WTC11 (cell line): ENCODE measurements at regions of chr9 and their contacts with region 1.

Region 1: DNA sequence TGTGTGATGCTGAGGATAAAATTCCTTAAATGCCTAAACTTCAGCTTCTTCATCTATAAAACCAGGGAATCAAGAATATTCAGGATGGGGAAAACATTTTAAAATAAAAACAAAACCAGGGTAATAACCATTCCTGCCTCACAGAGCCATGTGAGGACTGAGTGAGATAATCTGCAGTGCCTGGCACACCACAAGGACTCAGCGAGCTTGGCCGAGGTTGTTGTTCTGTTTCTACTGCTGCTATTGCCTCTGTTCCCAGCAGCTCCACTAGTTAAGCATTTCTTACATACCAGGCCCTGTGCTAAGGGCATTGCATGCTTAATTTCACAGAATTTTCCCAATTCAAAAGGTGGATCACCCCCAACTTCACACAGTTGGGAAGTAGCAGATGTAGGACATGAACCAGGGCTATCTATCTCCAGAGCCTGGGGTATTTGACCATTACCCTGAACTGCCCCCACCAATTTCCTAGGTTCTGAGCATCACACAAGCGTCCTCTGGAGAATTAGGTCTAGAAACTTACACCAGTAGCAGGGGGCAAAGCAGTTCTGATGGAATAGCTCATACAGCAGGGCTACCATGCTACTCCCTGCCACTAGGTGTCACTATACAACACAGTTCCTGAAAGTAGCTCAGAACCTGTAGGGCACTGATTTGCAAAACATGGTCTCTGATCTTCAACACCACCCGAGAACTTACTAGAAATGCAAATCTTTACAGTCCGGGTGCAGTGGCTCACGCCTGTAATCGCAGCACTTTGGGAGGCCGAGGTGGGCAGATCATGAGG is 74.3 kb downstream of the LRSAM1 start:
- DNase-seq: no peak
- ATAC-seq: no peak
- H3K4me3 Mint-ChIP-seq: no peak overlapping the region
- H3K27ac Mint-ChIP-seq: no peak overlapping the region; the same call in 1 of the 2 replicates
- H3K4me1 Mint-ChIP-seq: peaks cover 32% of the 10 kb centered on the region
- H3K27me3 Mint-ChIP-seq: no peaks in the 10 kb centered on the region; the same call in 1 of the 2 replicates
- CTCF ChIP-seq: peak; percentile 61

Region 2: GRCh38 chr9:127503947-127504782 is 21.4 kb before region 1 on chr9:
- CTCF ChIA-PET with region 1: interaction called, 17 read pairs
- POLR2A ChIA-PET with region 1: no interaction called
- DNase-seq: peak; percentile 94
- ATAC-seq: peak; percentile 84
- H3K4me3 Mint-ChIP-seq: no peak overlapping the region
- H3K27ac Mint-ChIP-seq: no peak overlapping the region
- H3K4me1 Mint-ChIP-seq: no peaks in the 10 kb centered on the region
- H3K27me3 Mint-ChIP-seq: no peaks in the 10 kb centered on the region
- CTCF ChIP-seq: peak; percentile 89

Region 3: DNA sequence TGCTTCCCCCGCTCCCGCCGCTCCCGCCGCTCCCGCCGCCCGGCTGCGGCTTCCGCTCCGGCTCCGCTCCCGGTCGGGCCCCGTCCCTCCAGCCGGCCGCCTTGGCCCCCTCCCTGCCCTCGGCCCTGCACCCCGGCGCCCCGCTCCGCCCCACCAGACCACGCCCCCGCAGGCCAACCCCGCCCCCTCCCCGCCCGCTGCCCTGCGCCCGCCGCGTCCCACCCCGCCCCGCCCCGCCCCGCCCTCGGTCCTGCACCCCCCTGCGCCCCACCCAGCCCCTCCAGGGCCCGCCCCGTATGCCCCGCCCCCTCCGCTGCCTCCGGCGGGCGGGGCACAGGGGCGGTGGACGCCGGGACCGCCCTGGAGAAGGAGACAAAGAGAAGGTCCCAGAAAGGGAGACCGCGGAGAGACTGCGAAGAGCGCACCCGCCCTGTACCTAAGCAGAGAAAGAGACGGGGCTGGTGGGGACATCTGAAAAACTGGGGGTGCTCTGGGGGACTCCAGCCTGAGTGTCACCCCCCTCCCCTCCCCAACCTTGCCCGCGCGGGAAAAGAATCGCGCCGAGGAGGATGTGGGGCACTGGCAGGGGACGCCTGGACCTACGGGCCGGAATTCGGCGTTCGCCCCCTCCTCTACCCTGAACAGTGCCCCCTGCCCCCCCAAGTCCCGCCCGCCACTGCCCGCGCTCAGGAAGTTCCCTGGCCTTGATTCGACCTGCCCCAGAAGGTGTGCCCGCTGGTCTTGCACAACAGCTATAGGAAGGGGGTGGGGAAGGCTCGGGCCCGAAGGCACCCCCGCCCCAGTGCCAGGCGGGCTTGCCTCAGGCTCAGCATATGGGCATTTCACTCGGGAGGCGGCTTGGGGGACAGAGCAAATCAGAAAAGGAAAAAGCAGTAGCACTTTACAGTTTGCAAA is 43.6 kb after region 1 on chr9:
- CTCF ChIA-PET with region 1: interaction called, 16 read pairs
- POLR2A ChIA-PET with region 1: interaction called, 6 read pairs
- DNase-seq: peak; percentile 77
- ATAC-seq: peak; percentile 79
- H3K4me3 Mint-ChIP-seq: peak overlapping the region; percentile 71
- H3K27ac Mint-ChIP-seq: no peak overlapping the region
- H3K4me1 Mint-ChIP-seq: peaks cover 26% of the 10 kb centered on the region
- H3K27me3 Mint-ChIP-seq: peaks cover 10% of the 10 kb centered on the region
- CTCF ChIP-seq: no peak

Region 4: DNA sequence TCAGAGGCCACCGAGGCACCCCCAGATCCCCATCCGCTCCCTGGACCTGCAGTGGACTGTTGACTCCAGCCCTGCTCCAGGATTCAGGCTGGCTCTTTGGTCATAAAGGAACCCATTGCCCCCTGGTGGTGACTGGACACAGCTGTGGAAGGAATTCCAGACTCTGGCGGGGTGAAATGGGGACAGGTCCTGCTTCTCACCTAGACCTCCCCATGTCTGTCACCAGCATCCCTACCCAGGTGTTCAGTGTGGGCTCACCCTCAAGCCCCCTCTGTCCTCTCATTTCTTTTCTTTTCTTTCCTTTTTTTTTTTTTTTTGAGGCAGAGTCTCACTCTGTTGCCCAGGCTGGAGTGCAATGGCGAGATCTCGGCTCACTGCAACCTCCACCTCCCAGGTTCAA is 60.9 kb after region 1 on chr9:
- CTCF ChIA-PET with region 1: interaction called, 17 read pairs
- POLR2A ChIA-PET with region 1: no interaction called
- DNase-seq: peak; percentile 86
- ATAC-seq: peak; percentile 92
- H3K4me3 Mint-ChIP-seq: no peak overlapping the region
- H3K27ac Mint-ChIP-seq: no peak overlapping the region
- H3K4me1 Mint-ChIP-seq: peaks cover 15% of the 10 kb centered on the region
- H3K27me3 Mint-ChIP-seq: no peaks in the 10 kb centered on the region
- CTCF ChIP-seq: peak; percentile 72

Region 5: DNA sequence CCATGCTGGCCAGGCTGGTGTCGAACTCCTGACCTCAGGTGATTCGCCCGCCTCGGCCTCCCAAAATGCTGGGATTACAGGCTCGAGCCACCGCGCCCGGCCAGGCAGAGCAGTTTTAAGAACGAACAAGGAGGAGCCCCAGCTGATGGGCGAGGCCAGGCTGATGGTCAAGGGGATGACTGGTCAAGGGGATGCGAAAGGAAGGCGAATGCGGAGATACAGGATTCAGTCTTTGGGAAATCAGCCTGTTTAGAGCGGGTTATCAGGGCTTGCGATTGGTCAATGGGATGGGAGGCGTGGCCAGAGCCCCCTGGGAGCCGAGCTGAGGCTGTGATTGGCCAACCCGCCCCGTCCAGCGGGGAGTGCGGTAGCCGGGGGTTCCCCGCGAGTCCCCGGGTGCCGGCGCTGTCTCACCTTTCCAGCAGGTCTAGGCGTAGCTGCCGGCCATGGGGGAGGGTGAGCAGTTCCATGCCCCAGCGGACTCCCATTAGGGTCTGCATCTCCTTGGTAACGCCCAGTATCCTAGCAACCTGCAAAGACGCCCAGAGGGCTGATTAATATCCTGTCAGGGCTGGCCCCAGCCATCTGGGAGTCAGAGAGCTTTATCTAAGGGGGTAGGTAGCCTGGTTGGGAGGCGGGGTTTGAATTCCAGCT is 217.0 kb after region 1 on chr9:
- CTCF ChIA-PET with region 1: interaction called, 10 read pairs
- POLR2A ChIA-PET with region 1: no interaction called
- DNase-seq: peak; percentile 94
- ATAC-seq: peak; percentile 85
- H3K4me3 Mint-ChIP-seq: peak overlapping the region; percentile 90
- H3K27ac Mint-ChIP-seq: peak overlapping the region; percentile 97
- H3K4me1 Mint-ChIP-seq: peaks cover 6% of the 10 kb centered on the region
- H3K27me3 Mint-ChIP-seq: peaks cover 15% of the 10 kb centered on the region
- CTCF ChIP-seq: no peak